CD8-positive, alpha-beta T cell (primary cell): ENCODE measurements at regions of chr1 and their contacts with region 1.

Region 1: GRCh38 chr1:171654942-171655745 is 2.7 kb upstream of the MYOC start:
- DNase-seq: peak; percentile 33 to 72 (median 61)
- ATAC-seq: peak; percentile 52
- H3K4me3 ChIP-seq: no peak overlapping the region
- H3K4me3 Mint-ChIP-seq: no peak overlapping the region
- H3K27ac ChIP-seq: no peak overlapping the region
- H3K27ac Mint-ChIP-seq: no peak overlapping the region
- H3K4me1 ChIP-seq: peaks cover 6% of the 10 kb centered on the region
- H3K4me1 Mint-ChIP-seq: peaks cover 10% of the 10 kb centered on the region
- H3K27me3 ChIP-seq: no peaks in the 10 kb centered on the region
- H3K27me3 Mint-ChIP-seq: peaks cover 27% of the 10 kb centered on the region
- CTCF ChIP-seq: peak; percentile 46

Region 2: DNA sequence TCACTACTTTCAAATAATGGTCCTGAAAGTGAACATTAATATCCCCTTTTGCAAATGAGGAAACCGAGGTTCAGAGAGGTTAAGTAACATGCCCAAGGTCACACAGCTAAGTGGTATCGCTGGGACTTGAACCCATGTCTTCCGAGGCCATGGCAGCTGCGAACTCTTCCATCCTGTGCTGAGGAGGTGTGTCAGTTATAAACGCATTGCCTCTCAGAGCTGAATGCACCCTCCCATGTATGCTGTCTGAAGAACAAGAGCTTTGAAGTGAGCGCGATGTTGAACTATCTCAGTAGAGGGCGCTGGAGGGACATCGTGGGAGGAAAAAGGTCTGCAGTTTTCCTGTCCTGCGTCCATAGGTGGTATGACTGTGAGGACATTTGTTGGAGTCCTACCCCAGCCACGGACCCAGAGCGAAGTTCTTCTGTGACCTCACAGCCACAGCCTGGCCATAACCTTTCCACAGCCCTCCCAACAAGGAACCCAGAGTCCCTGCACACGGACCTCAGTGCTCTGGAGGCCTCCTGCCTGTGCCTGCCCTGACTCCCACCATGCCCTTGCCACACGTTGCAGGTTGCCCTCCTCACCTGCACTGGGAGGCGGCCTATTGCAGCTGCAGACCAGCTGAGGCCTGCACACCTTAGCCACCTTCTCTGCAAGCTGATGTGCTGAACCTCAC is 10.2 kb before region 1 on chr1:
- CTCF ChIA-PET with region 1: interaction called, 16 read pairs
- POLR2A ChIA-PET with region 1: no interaction called
- intact Hi-C with region 1: no loop called
- DNase-seq: peak; percentile 20 to 73 (median 60)
- ATAC-seq: peak; percentile 94
- H3K4me3 ChIP-seq: no peak overlapping the region
- H3K4me3 Mint-ChIP-seq: no peak overlapping the region
- H3K27ac ChIP-seq: no peak overlapping the region
- H3K27ac Mint-ChIP-seq: no peak overlapping the region
- H3K4me1 ChIP-seq: no peaks in the 10 kb centered on the region
- H3K4me1 Mint-ChIP-seq: peaks cover 5% of the 10 kb centered on the region
- H3K27me3 ChIP-seq: no peaks in the 10 kb centered on the region
- H3K27me3 Mint-ChIP-seq: no peaks in the 10 kb centered on the region
- CTCF ChIP-seq: peak; percentile 64

Region 3: GRCh38 chr1:171850651-171851350 is 195.7 kb after region 1 on chr1:
- CTCF ChIA-PET with region 1: interaction called, 3 read pairs
- POLR2A ChIA-PET with region 1: no interaction called
- intact Hi-C with region 1: loop called in 1 of 2 experiments (anchors 5 kb)
- DNase-seq: peak in 2 of 9 experiments; percentile 10 to 22
- ATAC-seq: no peak
- H3K4me3 ChIP-seq: no peak overlapping the region
- H3K4me3 Mint-ChIP-seq: no peak overlapping the region
- H3K27ac ChIP-seq: no peak overlapping the region
- H3K27ac Mint-ChIP-seq: no peak overlapping the region
- H3K4me1 ChIP-seq: no peaks in the 10 kb centered on the region
- H3K4me1 Mint-ChIP-seq: no peaks in the 10 kb centered on the region
- H3K27me3 ChIP-seq: peaks cover 0 to 2% of the 10 kb centered on the region in 2 experiments
- H3K27me3 Mint-ChIP-seq: peaks cover 5% of the 10 kb centered on the region
- CTCF ChIP-seq: no peak